Psoas muscle (tissue), 8 donors: ENCODE measurements at regions of chr14 and their contacts with region 1.

Region 1: GRCh38 chr14:103628684-103629502 is at the start of gene KLC1:
- DNase-seq: peak; percentile 87 to 93
- ATAC-seq: peak; percentile 84 to 88 (median 85)
- H3K4me3 ChIP-seq: peak within 1 kb of the TSS; percentile 76
- H3K27ac ChIP-seq: peak within 1 kb of the TSS; percentile 88
- H3K4me1 ChIP-seq: peaks cover 54% of the 10 kb centered on the region
- H3K27me3 ChIP-seq: no peaks in the 10 kb centered on the region
- CTCF ChIP-seq: no peak
- total RNA-seq, gene KLC1: 126 to 190 (median 148) TPM

Region 2: DNA sequence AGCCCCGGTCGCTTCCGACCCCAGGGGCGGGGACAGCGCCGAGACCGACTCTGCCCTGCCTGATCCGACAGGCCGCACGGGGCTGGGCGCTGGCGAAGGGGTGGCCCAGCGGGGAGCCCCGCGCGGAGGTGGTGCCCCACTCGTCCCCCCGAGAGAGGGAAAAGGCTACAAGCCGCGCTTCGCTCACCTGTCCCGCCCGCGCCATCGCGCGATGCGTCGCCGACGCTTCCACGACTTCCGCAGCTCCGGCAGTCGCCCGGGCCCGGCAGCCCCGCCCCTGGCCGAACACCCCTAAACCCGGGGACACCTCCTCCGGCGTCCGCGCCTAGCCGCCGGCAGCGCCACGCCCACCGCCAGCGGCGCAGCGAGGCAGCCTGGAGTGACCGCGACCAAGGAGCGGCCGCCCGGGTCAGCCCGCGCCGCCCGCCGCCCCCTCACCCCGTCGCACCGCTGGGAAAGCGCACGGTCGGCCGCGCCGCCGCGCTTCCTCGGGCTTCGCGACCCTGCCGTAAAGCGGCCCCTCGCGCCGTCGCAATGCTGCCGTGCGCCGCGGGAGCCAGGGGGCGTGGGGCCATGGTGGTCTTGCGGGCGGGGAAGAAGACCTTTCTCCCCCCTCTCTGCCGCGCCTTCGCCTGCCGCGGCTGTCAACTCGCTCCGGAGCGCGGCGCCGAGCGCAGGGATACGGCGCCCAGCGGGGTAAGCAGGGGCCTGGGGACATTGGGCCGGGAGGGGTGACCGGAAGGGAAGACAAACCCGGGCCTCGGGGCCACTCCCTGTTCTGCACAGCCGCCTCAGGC is 66.3 kb before region 1 on chr14 and contains the starts of genes BAG5 and COA8:
- intact Hi-C with region 1: loop called in 1 of 2 experiments (anchors 5 kb)
- DNase-seq: peak; percentile 88 to 94
- ATAC-seq: peak; percentile 74 to 83 (median 79)
- H3K4me3 ChIP-seq: peak within 1 kb of the TSS; percentile 92
- H3K27ac ChIP-seq: peak within 1 kb of the TSS; percentile 99
- H3K4me1 ChIP-seq: peaks cover 59% of the 10 kb centered on the region
- H3K27me3 ChIP-seq: no peaks in the 10 kb centered on the region
- CTCF ChIP-seq: no peak
- total RNA-seq, gene BAG5: 15.4 to 29.5 (median 23.2) TPM
- total RNA-seq, gene COA8: 73.6 to 101 (median 80.0) TPM

Region 3: DNA sequence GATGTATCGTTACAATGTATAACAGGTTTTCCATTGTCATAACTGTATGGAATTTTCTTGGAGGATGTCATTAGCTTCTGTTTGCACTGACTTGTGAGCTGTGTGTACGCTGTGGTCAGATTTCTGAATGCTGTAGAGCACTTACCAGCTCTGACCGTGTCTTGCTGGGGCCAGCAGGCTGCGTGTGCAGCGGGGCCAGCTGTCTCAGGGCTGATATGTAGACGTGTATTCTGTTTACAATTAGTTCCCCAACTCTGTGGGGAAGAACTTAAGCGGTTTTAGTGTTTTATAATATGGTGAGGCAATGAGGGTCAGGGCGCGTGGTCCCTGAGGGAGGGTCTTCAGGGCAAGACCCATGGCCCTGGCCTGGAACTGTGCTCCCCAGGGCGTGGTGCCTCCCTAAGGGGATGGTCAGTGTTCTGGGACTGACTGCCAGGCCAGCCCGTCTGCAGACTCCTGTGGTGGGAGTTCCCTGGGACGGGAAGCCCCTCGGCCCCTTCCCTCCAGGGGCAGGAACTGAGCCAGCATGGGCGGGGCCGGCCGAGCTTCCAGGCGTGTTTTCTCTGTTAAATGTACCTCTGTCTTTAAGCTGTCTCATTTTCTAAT is 67.7 kb after region 1 on chr14:
- intact Hi-C with region 1: loop called in 1 of 2 experiments (anchors 5 kb)
- DNase-seq: peak; percentile 55 to 80
- ATAC-seq: no peak
- H3K4me3 ChIP-seq: no peak overlapping the region
- H3K27ac ChIP-seq: peak overlapping the region; percentile 64
- H3K4me1 ChIP-seq: peaks cover 58% of the 10 kb centered on the region
- H3K27me3 ChIP-seq: no peaks in the 10 kb centered on the region
- CTCF ChIP-seq: no peak